ENCODE measurements at regions of chr2 and their contacts with region 1.

Region 1: GRCh38 chr2:12284487-12284886 is 432.2 kb upstream of the TRIB2 start:
- DNase-seq: peak; percentile 29
- H3K4me3 Mint-ChIP-seq: no peak overlapping the region
- H3K27ac Mint-ChIP-seq: no peak overlapping the region
- H3K4me1 Mint-ChIP-seq: peaks cover 21% of the 10 kb centered on the region
- H3K27me3 Mint-ChIP-seq: peaks cover 40% of the 10 kb centered on the region

Region 2: DNA sequence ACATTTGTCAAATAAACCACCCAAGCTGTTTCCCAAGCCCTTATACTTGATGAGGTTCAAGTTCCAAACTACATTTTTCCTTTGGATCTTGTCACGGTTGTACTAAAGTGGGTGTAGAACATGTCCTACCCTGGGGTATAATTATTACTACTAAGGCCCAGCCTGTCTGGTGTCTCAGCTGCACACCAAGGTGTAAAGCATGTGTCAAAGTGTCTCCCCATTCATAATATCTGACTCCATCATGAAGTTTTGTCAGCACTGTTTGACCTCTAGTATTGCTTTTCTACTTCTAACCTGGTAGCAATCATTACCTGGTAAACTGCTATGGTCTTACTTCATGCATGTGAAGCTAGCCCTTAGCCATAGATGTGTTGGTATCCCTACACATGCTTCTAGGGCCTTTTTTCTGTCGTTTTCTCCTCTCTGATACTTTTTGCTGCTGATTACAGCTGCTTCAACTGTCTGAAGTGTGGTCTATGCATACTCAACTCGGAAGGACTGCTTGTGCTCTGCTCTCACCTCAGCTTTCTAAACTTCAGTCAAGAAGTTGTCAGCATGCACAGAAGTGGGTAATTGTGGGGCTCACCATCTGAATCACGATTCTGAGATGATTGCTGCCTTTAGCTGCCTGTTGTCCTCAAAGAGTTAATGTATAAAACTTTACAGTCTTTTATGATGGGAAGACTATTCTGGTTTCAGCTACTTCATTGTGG is 13.5 kb before region 1 on chr2:
- intact Hi-C with region 1: loop called (anchors 1 kb)
- DNase-seq: peak; percentile 63
- H3K4me3 Mint-ChIP-seq: peak overlapping the region; percentile 7
- H3K27ac Mint-ChIP-seq: no peak overlapping the region
- H3K4me1 Mint-ChIP-seq: peaks cover 11% of the 10 kb centered on the region
- H3K27me3 Mint-ChIP-seq: peaks cover 5% of the 10 kb centered on the region